ENCODE measurements at regions of chr5 and their contacts with region 1.

Region 1: GRCh38 chr5:13994621-13995253 is 50.2 kb upstream of the DNAH5 start:
- DNase-seq: no peak
- ATAC-seq: no peak
- H3K4me3 ChIP-seq: no peak overlapping the region
- H3K27ac ChIP-seq: no peak overlapping the region
- H3K4me1 ChIP-seq: no peaks in the 10 kb centered on the region
- H3K27me3 ChIP-seq: no peaks in the 10 kb centered on the region

Region 2: GRCh38 chr5:14097998-14098471 is 103.3 kb after region 1 on chr5:
- intact Hi-C with region 1: loop called in 2 of 4 experiments (anchors 10 kb)
- DNase-seq: no peak
- ATAC-seq: no peak
- H3K4me3 ChIP-seq: no peak overlapping the region
- H3K27ac ChIP-seq: no peak overlapping the region
- H3K4me1 ChIP-seq: no peaks in the 10 kb centered on the region
- H3K27me3 ChIP-seq: no peaks in the 10 kb centered on the region

Region 3: DNA sequence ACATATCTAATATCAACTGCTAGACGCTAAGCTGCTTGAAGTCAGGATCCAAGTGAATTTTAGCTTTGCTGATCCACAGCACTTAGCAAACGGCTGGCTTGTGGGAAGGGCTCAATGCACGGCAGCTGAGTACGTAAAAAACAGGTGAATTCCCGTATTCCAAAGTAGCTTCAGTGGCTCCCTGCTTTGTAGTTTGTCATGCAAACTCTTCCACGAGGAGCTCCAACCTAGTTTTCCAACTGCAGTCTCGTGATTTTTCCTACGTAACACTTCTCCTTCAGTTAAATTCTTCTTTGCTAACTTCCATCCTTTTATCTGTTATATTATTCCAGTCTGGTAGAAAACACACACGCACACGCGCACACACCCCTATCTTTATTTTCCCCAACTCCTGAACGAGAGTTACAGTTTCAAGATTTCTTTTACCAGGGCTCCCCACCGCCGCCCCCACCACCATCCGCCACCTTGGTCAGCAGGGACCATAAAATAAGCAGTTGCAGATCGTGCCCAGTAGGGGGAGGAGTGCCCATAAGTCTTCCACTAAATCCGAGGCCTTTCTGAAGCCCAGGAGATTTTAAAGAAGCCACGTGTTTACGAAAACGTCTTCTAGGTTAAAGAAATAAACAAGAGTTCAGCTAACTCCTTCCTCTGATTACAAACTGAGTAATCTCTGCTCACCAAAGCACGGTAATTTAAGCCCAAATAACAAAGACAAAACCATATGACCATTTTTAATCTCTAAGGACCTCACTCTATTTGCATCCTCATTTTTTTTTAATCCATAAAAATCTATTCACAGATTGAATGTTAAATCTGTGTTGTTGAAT is 113.6 kb after region 1 on chr5:
- intact Hi-C with region 1: loop called in 1 of 4 experiments (anchors 10 kb)
- DNase-seq: peak; percentile 47 to 76 (median 66)
- ATAC-seq: peak; percentile 75 to 86
- H3K4me3 ChIP-seq: peak overlapping the region; percentile 19
- H3K27ac ChIP-seq: no peak overlapping the region
- H3K4me1 ChIP-seq: no peaks in the 10 kb centered on the region
- H3K27me3 ChIP-seq: no peaks in the 10 kb centered on the region

Region 4: DNA sequence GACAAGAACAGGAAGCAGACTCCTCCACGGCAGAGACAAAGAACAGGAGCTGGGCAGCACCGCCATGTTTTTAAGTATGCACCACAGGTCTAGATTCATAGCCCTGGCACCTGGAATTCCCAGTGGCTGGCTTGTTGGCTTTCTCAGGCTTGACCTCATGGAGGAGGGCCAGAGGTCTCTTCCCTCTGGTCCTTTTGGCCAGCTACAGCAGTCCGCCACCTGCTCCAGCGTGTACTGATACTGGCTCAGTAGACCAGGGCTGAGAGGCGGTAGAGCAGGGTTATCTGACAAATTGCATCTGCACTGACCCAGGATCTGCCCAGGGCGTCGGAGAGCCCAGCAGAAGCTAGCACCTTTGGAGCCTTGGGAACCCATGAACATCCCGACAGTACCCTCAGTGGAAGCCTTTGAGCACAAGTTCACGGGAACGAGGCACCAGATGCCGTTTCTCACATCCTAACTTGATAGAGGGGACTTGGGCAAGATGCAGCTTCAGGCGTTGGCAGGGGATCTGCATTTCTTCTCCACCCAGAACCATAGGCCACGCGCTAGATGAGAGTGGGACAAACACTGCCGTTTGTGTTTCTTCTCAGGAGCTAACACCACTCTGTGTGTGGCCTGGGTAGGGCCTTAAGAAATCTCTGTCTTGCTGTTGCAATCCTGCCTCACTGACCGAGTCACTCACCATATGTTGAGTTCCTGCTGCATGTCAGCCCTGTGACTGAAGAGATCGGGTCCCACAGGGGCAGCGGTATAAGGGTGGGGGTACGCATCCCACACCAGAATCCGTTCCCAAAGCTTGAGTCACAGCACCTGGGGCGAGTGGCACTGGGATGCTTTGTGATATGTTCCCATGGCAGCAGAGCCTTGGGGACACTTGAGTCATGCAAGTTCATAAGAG is 496.5 kb after region 1 on chr5:
- intact Hi-C with region 1: no loop called
- DNase-seq: peak in 1 of 3 donors; percentile 68
- ATAC-seq: peak; percentile 67 to 68
- H3K4me3 ChIP-seq: no peak overlapping the region
- H3K27ac ChIP-seq: no peak overlapping the region
- H3K4me1 ChIP-seq: peaks cover 1% of the 10 kb centered on the region
- H3K27me3 ChIP-seq: no peaks in the 10 kb centered on the region